CD4-positive, alpha-beta memory T cell (primary cell): ENCODE measurements at regions of chr20 and their contacts with region 1.

Region 1: DNA sequence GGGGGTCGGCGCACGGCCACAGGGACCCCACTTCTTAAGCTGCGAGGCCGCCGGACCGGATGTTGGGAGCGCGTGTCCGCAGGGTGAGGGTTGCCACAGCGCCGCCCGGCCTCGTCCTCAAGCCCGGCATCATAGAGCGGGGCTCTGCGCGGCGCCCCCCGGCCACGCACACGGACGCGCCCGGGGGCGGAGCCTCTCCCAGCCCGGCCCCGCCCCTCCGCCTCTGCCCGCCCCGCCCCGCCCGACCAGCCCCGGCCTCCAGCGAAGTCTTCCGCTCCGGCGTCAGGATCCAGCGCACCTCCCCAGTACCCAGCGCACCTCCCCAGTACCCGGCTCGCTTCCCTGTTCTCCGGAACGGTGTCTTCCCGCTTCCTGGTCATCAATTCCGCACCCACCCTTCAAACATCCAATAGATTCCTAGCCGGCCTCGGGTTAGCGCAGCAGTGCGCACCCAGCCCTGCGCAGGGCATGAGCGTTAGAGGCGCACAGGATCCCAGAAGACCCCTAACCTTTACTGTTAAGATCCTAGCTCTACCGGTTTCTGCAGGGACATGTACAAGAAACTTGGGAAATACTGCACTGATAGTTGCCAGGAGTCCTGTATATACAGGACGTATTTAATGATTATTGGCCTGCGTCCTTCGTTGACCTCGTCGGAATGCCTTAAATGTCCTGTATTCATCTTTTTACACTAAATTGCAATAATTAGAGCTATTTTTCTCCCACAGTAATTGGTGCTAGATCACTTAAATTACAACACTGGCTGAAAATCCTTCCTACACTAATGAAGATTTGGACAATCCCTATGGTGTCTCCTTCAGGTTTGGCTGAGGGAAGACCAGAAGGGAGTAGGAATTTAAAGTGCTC is 535 bp upstream of the DNAAF9 start:
- DNase-seq: peak; percentile 63 to 77 (median 71)
- H3K4me3 ChIP-seq: peak overlapping the region; percentile 83 to 93
- H3K4me3 Mint-ChIP-seq: peak overlapping the region; percentile 95 to 99 (median 98)
- H3K27ac ChIP-seq: peak overlapping the region; percentile 69
- H3K27ac Mint-ChIP-seq: peak overlapping the region; percentile 94 to 98 (median 95)
- H3K4me1 ChIP-seq: peaks cover 21% of the 10 kb centered on the region
- H3K4me1 Mint-ChIP-seq: peaks cover 24 to 41% (median 30%) of the 10 kb centered on the region in 4 donors
- H3K27me3 ChIP-seq: no peaks in the 10 kb centered on the region
- H3K27me3 Mint-ChIP-seq: no peaks in the 10 kb centered on the region

Region 2: DNA sequence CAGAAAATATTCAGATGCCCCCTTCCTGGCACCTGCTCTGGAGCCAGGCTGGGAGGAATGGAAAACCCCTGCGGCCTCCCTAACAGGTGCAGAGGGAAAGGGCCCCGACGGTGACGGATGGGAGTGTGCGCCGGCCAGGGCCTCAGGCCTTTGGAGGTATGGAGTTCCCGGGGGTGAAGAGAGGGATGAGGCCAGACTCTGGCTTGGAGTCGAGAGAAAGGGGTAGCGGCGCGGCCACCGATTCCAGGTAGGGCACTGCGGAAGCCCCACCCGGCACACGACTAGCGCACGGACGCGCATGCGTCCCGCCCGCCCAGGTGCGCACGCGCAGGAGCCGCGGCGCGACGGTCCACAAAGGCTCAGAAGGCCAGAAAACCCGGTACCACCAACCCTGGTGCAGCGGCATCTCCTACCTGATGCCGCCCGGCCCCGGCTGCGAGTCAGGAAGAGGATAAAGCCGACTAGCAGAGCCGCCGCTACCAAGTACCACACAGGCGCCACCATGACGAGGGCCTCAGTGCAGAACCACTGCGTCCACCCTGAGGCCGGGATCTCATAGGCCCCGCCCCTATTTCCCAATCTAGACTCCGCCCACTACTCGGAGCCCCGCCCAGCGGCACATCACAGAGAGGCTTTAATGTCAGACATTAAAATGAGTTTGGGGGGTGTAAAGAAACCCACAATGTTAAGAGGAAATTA is 203.7 kb before region 1 on chr20 and contains the start of gene DDRGK1:
- CTCF ChIA-PET with region 1: no interaction called
- POLR2A ChIA-PET with region 1: interaction called, 3 read pairs
- intact Hi-C with region 1: loop called (anchors 1 kb)
- DNase-seq: peak; percentile 86 to 92 (median 91)
- H3K4me3 ChIP-seq: peak within 1 kb of the TSS; percentile 94 to 99
- H3K4me3 Mint-ChIP-seq: peak within 1 kb of the TSS; percentile 93 to 98 (median 97)
- H3K27ac ChIP-seq: peak within 1 kb of the TSS; percentile 91
- H3K27ac Mint-ChIP-seq: peak within 1 kb of the TSS; percentile 96 to 97 (median 97)
- H3K4me1 ChIP-seq: peaks cover 31% of the 10 kb centered on the region
- H3K4me1 Mint-ChIP-seq: peaks cover 9 to 38% (median 24%) of the 10 kb centered on the region in 4 donors
- H3K27me3 ChIP-seq: no peaks in the 10 kb centered on the region
- H3K27me3 Mint-ChIP-seq: no peaks in the 10 kb centered on the region
- total RNA-seq, gene DDRGK1: 55.6 to 61.0 TPM

Region 3: DNA sequence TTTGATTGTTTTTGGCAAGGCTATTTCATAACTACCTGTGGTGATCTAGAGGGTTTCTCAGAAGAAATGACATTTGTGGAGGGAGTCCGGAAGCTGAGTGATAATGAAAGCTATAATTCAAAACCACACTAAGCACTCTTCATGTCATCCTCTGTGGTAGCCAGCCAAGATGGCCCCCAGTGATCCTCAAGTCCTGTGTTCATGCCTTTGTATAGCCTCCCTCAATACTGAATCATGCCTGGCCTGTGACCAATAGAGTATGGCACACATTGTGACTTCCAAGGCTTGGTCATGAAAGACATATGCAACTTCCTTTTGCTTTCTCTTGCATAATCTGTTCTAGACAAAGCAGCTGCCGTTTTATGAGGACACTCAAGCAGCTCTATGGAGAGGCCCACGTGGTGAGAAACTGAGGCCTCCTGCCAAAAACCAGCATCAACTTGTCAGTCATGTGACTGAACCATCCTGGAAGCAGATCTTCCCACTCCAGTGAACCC is 12.3 kb after region 1 on chr20:
- CTCF ChIA-PET with region 1: interaction called, 3 read pairs
- POLR2A ChIA-PET with region 1: interaction called, 28 read pairs
- intact Hi-C with region 1: loop called (anchors 1 kb)
- DNase-seq: peak; percentile 23 to 54 (median 48)
- H3K4me3 ChIP-seq: peak overlapping the region in 1 of 2 donors; percentile 34
- H3K4me3 Mint-ChIP-seq: peak overlapping the region; percentile 4 to 70 (median 32)
- H3K27ac ChIP-seq: no peak overlapping the region
- H3K27ac Mint-ChIP-seq: peak overlapping the region in 5 of 7 donors; percentile 5 to 63 (median 54)
- H3K4me1 ChIP-seq: peaks cover 15% of the 10 kb centered on the region
- H3K4me1 Mint-ChIP-seq: peaks cover 6 to 17% (median 7%) of the 10 kb centered on the region in 4 donors
- H3K27me3 ChIP-seq: no peaks in the 10 kb centered on the region
- H3K27me3 Mint-ChIP-seq: peaks cover 0 to 1% of the 10 kb centered on the region in 2 donors

Region 4: DNA sequence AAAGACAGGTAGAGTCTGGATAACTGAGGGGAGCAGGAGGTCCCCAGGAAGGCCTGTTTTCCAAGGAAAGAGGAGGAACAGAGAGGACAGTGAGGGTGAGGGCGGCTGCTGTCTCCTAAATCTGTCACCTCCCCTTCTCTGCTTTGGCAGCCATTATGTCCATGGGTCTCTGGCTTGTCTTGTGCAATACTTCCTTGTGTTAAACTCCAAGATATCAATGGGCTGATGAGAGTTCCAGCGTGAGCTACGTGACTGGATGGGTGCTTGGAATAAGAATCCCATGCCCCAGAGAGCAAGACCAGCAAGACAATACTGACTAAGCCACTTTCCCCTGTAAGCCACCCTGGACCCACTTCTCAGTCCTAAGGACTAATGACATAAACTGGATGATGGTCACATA is 25.7 kb after region 1 on chr20:
- CTCF ChIA-PET with region 1: no interaction called
- POLR2A ChIA-PET with region 1: no interaction called
- intact Hi-C with region 1: no loop called
- DNase-seq: no peak
- H3K4me3 ChIP-seq: no peak overlapping the region
- H3K4me3 Mint-ChIP-seq: no peak overlapping the region
- H3K27ac ChIP-seq: no peak overlapping the region
- H3K27ac Mint-ChIP-seq: no peak overlapping the region
- H3K4me1 ChIP-seq: no peaks in the 10 kb centered on the region
- H3K4me1 Mint-ChIP-seq: peaks cover 0 to 1% (median 0%) of the 10 kb centered on the region in 4 donors
- H3K27me3 ChIP-seq: no peaks in the 10 kb centered on the region
- H3K27me3 Mint-ChIP-seq: peaks cover 0 to 3% of the 10 kb centered on the region in 2 donors

Region 5: DNA sequence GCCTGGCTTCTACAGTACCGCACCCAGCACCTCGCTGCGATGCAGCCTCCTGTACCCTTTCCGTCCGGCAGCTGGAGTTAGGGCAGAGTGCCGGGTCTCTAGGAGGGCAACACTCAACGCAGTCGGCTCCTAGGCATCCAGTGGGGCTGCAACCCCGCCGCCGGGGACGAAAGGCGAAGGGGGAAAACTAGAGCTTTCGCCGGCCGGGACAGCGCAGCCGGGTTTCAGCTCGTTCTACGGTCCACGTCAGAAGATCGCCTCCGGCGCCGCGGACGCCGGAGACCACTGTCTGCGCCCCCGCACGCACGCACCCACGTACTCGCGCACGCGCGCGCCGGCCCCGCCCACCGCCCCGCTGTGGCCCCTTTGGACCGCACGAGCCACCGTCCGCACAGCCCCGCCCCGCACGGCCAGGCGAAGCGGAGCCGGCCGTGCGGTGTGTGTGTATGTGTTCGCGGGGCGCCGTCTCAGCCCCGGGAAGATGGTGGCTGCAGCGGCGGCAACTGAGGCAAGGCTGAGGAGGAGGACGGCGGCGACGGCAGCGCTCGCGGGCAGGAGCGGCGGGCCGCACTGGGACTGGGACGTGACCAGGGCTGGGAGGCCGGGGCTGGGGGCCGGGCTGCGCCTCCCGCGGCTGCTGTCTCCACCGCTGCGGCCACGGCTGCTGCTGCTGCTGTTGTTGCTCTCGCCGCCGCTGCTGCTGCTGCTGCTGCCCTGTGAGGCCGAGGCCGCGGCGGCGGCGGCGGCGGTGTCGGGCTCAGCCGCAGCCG is 62.8 kb after region 1 on chr20 and contains the start of gene ATRN:
- CTCF ChIA-PET with region 1: no interaction called
- POLR2A ChIA-PET with region 1: interaction called, 28 read pairs
- intact Hi-C with region 1: loop called (anchors 1 kb)
- DNase-seq: peak; percentile 78 to 85 (median 82)
- H3K4me3 ChIP-seq: peak within 1 kb of the TSS; percentile 66 to 67
- H3K4me3 Mint-ChIP-seq: peak within 1 kb of the TSS; percentile 90 to 96 (median 94)
- H3K27ac ChIP-seq: peak within 1 kb of the TSS; percentile 51
- H3K27ac Mint-ChIP-seq: peak within 1 kb of the TSS; percentile 82 to 96 (median 88)
- H3K4me1 ChIP-seq: peaks cover 25% of the 10 kb centered on the region
- H3K4me1 Mint-ChIP-seq: peaks cover 26 to 45% (median 34%) of the 10 kb centered on the region in 4 donors
- H3K27me3 ChIP-seq: peaks cover 3% of the 10 kb centered on the region
- H3K27me3 Mint-ChIP-seq: peaks cover 0 to 4% of the 10 kb centered on the region in 2 donors
- total RNA-seq, gene ATRN: 12.4 to 12.5 TPM

Region 6: DNA sequence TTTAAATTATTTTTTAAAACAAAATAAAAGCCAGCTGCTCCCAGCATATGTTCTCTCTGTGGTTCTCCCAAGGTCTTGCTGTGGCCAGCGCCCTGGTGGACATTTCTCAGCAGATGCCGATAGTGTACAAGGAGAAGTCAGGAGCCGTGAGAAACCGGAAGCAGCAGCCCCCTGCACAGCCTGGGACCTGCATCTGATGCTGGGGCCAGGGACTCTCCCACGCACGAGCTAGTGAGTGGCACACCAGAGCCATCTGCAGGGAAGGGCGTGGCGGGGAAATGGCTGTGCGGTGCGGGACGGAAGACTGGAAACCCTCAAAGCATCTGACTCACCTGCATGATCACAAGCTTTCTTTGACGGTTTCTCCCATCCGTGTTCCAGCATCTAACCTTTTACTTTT is 238.6 kb after region 1 on chr20:
- CTCF ChIA-PET with region 1: no interaction called
- POLR2A ChIA-PET with region 1: no interaction called
- intact Hi-C with region 1: no loop called
- DNase-seq: no peak
- H3K4me3 ChIP-seq: no peak overlapping the region
- H3K4me3 Mint-ChIP-seq: no peak overlapping the region
- H3K27ac ChIP-seq: no peak overlapping the region
- H3K27ac Mint-ChIP-seq: no peak overlapping the region
- H3K4me1 ChIP-seq: no peaks in the 10 kb centered on the region
- H3K4me1 Mint-ChIP-seq: peaks cover 0 to 1% (median 0%) of the 10 kb centered on the region in 4 donors
- H3K27me3 ChIP-seq: no peaks in the 10 kb centered on the region
- H3K27me3 Mint-ChIP-seq: no peaks in the 10 kb centered on the region

Region 7: DNA sequence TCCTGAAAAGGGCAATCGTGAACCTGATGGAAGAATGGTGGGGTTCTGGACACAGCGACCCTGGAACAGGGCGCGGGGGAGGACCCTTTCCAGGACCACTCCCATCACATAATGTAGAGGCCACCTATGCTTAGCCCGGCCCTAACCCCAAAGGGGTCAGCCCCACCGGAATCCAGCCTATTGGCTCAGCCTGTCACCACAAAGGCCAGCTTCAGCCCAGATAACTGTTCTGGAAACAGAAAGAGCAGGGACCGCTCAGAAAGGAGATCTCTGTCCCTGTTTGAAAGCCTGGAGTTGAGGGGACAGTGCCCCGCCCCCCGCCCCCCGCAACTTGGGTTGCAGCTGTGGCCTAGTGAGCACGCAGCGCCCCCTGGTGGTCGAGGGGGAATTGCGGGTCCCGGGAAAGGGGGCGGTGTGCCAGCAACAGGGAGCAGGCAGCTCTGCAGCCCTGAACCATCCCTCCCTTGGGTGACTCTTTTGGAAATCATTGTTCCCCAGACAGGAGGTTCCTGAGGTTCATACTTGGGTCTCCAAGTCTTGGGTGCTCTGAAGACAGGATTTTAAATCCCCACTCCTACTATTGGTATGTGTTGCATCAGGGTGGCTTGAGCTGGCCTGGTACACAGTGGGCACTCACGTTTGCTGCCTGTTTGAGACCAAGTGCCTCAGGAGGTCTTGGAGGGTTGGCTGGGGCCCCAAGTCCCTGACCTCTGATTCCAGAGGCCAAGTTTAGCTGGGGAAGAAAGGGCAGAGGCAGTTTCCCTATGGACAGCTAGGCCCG is 302.9 kb after region 1 on chr20:
- CTCF ChIA-PET with region 1: no interaction called
- POLR2A ChIA-PET with region 1: no interaction called
- intact Hi-C with region 1: no loop called
- DNase-seq: peak; percentile 55 to 69 (median 57)
- H3K4me3 ChIP-seq: no peak overlapping the region
- H3K4me3 Mint-ChIP-seq: no peak overlapping the region
- H3K27ac ChIP-seq: no peak overlapping the region
- H3K27ac Mint-ChIP-seq: no peak overlapping the region
- H3K4me1 ChIP-seq: no peaks in the 10 kb centered on the region
- H3K4me1 Mint-ChIP-seq: peaks cover 0 to 10% (median 2%) of the 10 kb centered on the region in 4 donors
- H3K27me3 ChIP-seq: no peaks in the 10 kb centered on the region
- H3K27me3 Mint-ChIP-seq: peaks cover 0 to 8% of the 10 kb centered on the region in 2 donors